Activated T-helper 1 cell treated with anti-CD3 and anti-CD28 coated beads, Interleukin-12 subunit alpha, Interleukin-12 subunit beta, Interleukin-2, Interleukin-4 antibody, amounts not matched to agents 30 ng/mL and 10 ng/mL and 1 ng/mL, durations not matched to agents 14 hours and 24 hours and 36 hours (primary cell): ENCODE measurements at regions of chr22 and their contacts with region 1.

Region 1: DNA sequence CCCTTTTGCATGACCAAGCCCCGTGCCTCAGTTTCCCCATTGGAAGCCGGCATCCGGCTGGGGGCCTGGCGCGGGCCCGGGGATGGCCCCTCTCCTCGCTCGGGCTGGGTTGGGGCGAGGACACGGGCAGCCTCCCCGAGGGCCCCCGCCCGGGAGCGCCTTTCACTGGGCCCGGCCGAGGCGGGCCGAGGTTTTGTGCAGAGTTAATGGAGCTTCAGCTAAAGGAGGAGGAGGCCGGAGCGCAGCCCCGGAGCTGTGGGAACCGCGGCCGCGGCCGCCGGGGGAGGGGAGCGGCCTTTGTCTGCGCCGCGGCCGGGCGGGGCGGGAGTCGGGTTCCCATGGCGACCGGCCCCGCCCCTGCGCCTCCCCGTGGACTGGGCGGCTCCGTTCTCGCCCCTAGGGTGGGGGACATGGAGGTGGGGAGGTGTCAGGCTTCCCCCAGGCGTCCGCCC is 1.4 kb upstream of the MAPK11 start:
- DNase-seq: peak; percentile 55
- H3K4me3 Mint-ChIP-seq: no peak overlapping the region
- H3K27ac Mint-ChIP-seq: no peak overlapping the region
- H3K4me1 Mint-ChIP-seq: peaks cover 10% of the 10 kb centered on the region
- H3K27me3 Mint-ChIP-seq: peaks cover 8% of the 10 kb centered on the region

Region 2: GRCh38 chr22:50200461-50201190 is 70.9 kb before region 1 on chr22 and contains the start of gene SELENOO:
- intact Hi-C with region 1: loop called (anchors 2 kb)
- DNase-seq: peak; percentile 90
- H3K4me3 Mint-ChIP-seq: peak within 1 kb of the TSS; percentile 88
- H3K27ac Mint-ChIP-seq: peak within 1 kb of the TSS; percentile 63
- H3K4me1 Mint-ChIP-seq: peaks cover 19% of the 10 kb centered on the region
- H3K27me3 Mint-ChIP-seq: no peaks in the 10 kb centered on the region
- total RNA-seq, gene SELENOO: 23.7 and 25.9 TPM in 2 replicates

Region 3: DNA sequence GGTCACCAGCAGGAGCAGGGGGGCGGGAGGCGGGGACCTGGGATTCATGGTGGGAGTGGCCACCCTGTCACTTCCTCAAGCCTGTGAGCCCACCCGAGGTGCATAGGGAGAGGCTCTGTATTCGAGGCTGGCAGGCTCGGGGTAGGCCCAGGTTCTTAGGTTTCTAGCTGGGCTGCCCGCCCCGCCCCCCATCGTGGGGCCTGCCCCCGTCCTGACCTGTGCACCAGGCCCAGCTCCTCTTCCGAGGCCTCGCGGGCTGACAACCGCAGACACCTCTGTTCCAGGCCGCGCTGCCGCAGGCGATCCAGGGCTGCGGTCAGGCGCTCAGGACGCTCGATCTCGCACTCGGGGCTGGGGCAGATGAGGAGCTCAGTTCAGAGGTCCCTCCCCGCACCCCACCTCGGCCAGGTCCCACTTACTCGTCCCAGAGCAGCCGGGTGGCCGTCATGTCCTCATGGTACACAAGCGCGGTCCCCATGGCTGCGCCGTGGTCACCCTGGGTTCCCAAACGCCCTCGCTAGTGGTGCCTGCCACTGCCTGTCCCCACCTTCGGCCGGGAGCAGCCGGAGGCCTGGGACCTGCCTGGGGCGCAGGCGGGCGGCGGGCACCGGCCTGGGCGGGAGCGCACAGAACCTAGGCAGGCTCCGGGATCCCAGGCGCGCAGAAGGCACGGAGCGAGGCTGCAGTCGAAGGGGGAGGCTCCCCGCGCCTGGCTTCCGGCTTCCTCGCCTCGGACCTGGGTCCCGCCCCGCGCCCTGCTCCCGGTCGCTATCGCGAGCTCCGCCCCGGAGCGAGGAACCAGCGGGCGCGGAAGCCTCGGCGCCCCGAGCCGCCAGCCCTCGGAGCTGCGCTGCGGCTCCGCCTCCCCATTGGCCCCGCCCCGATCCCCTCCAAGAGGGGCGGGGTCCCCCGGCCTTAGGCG is 20.7 kb before region 1 on chr22 and contains the start of gene HDAC10:
- intact Hi-C with region 1: loop called (anchors 1 kb)
- DNase-seq: peak; percentile 84
- H3K4me3 Mint-ChIP-seq: peak within 1 kb of the TSS; percentile 85
- H3K27ac Mint-ChIP-seq: peak within 1 kb of the TSS; percentile 83
- H3K4me1 Mint-ChIP-seq: peaks cover 5% of the 10 kb centered on the region
- H3K27me3 Mint-ChIP-seq: no peaks in the 10 kb centered on the region
- total RNA-seq, gene HDAC10: 67.4 and 68.1 TPM in 2 replicates

Region 4: GRCh38 chr22:50326959-50327710 is 55.6 kb after region 1 on chr22 and contains the start of gene DENND6B:
- intact Hi-C with region 1: loop called (anchors 1 kb)
- DNase-seq: peak; percentile 68
- H3K4me3 Mint-ChIP-seq: peak within 1 kb of the TSS; percentile 86
- H3K27ac Mint-ChIP-seq: peak within 1 kb of the TSS; percentile 78
- H3K4me1 Mint-ChIP-seq: peaks cover 7% of the 10 kb centered on the region
- H3K27me3 Mint-ChIP-seq: peaks cover 21% of the 10 kb centered on the region
- total RNA-seq, gene DENND6B: 1.7 and 2.2 TPM in 2 replicates